GM13977 (cell line): ENCODE measurements at regions of chr10 and their contacts with region 1.

Region 1: GRCh38 chr10:124388823-124389612 is 29.7 kb downstream of the OAT start:
- DNase-seq: peak; percentile 99
- CTCF ChIP-seq: peak; percentile 96

Region 2: GRCh38 chr10:123582084-123582989 is 806.7 kb before region 1 on chr10:
- in situ Hi-C with region 1: loop called (anchors 25 kb)
- DNase-seq: peak; percentile 80
- CTCF ChIP-seq: peak; percentile 92

Region 3: DNA sequence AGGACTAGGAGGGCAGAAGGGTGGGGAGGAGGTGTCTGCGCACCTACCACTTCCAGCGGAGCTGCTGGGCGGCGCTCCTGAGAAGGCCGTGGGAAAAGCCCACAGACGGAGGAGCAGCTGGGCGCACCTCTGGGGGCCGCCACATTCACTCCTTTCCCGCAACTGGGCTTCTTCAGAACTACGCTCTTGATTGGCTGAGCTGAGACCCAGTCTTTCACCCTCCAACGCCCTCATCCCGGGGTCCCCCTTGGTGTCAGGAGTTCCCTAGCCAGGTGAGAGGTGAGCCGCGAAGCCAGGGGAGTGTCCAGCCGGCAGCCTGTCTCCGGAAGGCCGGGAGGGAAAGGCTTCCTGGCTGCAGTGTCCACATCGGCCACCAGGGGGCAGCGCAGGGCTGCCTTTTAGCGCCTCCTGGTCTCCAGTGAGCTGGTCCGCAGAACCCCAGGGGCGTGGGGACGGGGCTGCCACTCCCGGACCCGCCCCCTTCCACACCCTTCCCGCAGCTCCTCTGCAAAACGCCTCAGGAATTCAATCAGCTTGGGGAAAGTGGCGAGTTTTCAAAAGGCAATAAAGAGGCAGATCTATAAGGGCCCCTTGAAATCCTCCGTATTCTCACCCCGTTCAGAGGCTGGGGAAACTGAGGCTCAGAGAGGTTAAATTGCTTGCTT is 394.5 kb before region 1 on chr10:
- in situ Hi-C with region 1: loop called (anchors 5 kb)
- DNase-seq: peak; percentile 90
- CTCF ChIP-seq: peak; percentile 98

Region 4: GRCh38 chr10:124197371-124198124 is 191.5 kb before region 1 on chr10:
- in situ Hi-C with region 1: no loop called
- DNase-seq: no peak
- CTCF ChIP-seq: no peak

Region 5: DNA sequence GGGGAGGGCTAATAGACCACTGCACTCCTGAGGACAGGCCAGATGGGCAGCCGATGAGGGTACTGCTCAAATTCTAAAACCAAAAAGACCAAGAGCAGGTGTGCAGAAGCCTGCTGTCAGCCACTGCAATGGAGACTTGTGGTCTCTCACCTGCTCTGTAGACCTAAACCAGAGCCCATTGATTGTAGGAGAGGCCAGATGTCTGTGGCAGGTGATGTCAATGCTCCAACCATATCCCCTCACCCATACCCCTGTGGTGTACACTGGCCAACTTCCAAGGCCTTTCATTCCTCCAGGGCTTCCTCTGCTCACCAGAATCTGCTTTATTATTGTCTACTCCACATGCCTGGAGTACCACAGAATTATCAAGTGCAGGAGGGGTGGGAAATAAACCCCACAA is 178.8 kb before region 1 on chr10:
- in situ Hi-C with region 1: no loop called
- DNase-seq: no peak
- CTCF ChIP-seq: no peak

Region 6: GRCh38 chr10:124568848-124569622 is 180.0 kb after region 1 on chr10:
- in situ Hi-C with region 1: no loop called
- DNase-seq: no peak
- CTCF ChIP-seq: no peak

Region 7: DNA sequence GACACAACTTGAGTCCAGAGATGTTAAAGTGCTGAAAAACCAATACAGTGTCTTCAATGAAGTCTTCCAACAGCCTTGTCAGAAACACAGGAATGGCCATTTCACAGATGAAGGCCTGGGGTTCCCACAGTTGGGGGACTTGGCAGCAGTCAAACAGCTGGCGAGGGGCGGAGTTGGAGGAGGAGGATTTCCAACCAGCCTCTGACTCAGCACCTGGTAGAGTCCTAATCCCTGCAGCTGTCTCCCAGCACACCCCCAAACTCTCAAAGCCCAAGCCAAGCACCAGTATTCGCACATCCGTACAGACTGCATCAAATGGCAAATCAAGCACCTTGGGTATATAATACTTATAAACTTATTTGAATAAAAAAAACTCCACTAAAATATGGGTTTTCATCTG is 743.3 kb after region 1 on chr10:
- in situ Hi-C with region 1: no loop called
- DNase-seq: no peak
- CTCF ChIP-seq: no peak